K562 (cell line): ENCODE measurements at regions of chr20 and their contacts with region 1.

Region 1: GRCh38 chr20:34927736-34928135 is 27.9 kb downstream of the GSS start:
- DNase-seq: no peak
- ATAC-seq: no peak
- H3K4me3 ChIP-seq: no peak overlapping the region
- H3K27ac ChIP-seq: no peak overlapping the region
- H3K4me1 ChIP-seq: no peaks in the 10 kb centered on the region; a peak in 1 of 5 replicates
- H3K27me3 ChIP-seq: no peaks in the 10 kb centered on the region
- CTCF ChIP-seq: no peak
- EP300 ChIP-seq: no peak
- POLR2A ChIP-seq: no peak
- RAD21 ChIP-seq: no peak

Region 2: GRCh38 chr20:34825530-34826362 is 102.0 kb before region 1 on chr20 and contains the start of gene NCOA6:
- CTCF ChIA-PET with region 1: no interaction called
- POLR2A ChIA-PET with region 1: no interaction called
- in situ Hi-C with region 1: no loop called
- intact Hi-C with region 1: no loop called
- DNase-seq: peak; percentile 89 to 96 (median 93)
- ATAC-seq: peak; percentile 67
- H3K4me3 ChIP-seq: peak within 1 kb of the TSS; percentile 83
- H3K27ac ChIP-seq: peak within 1 kb of the TSS; percentile 91
- H3K4me1 ChIP-seq: peaks cover 20% of the 10 kb centered on the region in 2 experiments; a peak in 4 of 5 replicates
- H3K27me3 ChIP-seq: no peaks in the 10 kb centered on the region
- CTCF ChIP-seq: no peak
- EP300 ChIP-seq: no peak
- POLR2A ChIP-seq: peak; percentile 88
- RAD21 ChIP-seq: no peak
- polyA plus RNA-seq, gene NCOA6: 8.2 to 9.5 TPM

Region 3: DNA sequence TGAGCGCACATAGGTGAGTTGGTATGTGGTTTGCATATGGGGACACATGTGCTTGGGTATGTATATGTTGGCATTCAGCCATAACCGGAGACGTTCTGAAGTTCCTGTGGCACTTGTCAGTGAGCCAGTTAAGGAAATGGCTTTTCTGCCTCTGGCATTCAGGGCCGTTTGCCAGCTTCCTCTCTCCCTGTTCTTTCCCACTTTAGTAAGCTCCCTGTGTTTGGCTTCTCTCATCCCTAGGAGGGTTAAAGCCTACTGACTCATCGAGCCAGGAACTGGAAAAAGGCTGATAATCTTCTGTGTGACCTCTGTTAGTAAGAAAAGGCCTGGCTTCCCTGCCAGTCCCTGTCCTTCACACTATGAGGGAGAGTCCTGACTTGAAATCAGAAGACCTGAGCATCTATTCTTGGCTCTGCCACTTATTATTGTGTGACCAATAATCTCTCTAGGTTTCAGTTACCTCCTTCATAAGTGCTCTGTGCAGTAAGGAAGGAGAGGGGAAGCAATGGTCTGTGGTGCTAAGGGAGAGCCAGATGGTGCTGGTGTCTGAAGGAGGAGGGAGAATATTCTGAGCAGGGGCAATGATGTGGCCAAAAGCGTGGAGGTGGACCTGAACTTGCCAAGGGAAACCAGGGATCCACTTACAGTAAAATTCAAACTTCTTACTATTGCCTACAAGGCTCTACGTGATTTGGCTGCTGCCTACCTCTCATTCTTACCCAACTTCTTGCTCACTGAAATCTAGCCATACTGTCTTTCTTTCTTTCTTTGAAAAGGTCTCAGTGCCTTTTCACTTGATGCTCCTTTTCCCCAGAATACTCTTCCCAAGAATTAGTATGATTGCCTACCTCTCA is 19.9 kb before region 1 on chr20:
- CTCF ChIA-PET with region 1: no interaction called
- POLR2A ChIA-PET with region 1: interaction called, 19 read pairs
- in situ Hi-C with region 1: no loop called
- intact Hi-C with region 1: no loop called
- DNase-seq: peak in 1 of 4 experiments; percentile 19
- ATAC-seq: peak; percentile 55
- H3K4me3 ChIP-seq: no peak overlapping the region
- H3K27ac ChIP-seq: peak overlapping the region; percentile 40; the same call in 1 of the 3 replicates
- H3K4me1 ChIP-seq: peaks cover 9 to 26% of the 10 kb centered on the region in 2 experiments; a peak in 4 of 5 replicates
- H3K27me3 ChIP-seq: no peaks in the 10 kb centered on the region
- CTCF ChIP-seq: no peak
- EP300 ChIP-seq: no peak
- POLR2A ChIP-seq: no peak
- RAD21 ChIP-seq: no peak

Region 4: GRCh38 chr20:34943808-34944568 is 16.3 kb after region 1 on chr20:
- CTCF ChIA-PET with region 1: no interaction called
- POLR2A ChIA-PET with region 1: interaction called, 14 read pairs
- in situ Hi-C with region 1: no loop called
- intact Hi-C with region 1: no loop called
- DNase-seq: no peak
- ATAC-seq: no peak
- H3K4me3 ChIP-seq: no peak overlapping the region
- H3K27ac ChIP-seq: no peak overlapping the region; the same call in 2 of the 3 replicates
- H3K4me1 ChIP-seq: no peaks in the 10 kb centered on the region
- H3K27me3 ChIP-seq: no peaks in the 10 kb centered on the region
- CTCF ChIP-seq: no peak
- EP300 ChIP-seq: no peak
- POLR2A ChIP-seq: no peak
- RAD21 ChIP-seq: no peak

Region 5: DNA sequence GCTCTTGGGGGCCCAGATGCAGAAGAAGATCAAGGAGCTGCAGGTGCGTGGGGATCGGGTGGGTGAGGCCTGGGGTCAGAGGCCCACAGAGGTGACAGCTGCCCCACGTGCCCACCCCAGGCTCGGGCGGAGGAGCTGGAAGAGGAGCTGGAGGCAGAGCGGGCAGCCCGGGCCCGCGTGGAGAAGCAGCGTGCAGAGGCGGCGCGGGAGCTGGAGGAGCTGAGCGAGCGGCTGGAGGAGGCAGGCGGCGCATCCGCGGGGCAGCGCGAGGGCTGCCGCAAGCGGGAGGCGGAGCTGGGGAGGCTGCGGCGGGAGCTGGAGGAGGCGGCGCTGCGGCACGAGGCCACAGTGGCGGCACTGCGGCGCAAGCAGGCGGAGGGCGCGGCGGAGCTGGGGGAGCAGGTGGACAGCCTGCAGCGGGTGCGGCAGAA is 69.4 kb after region 1 on chr20:
- CTCF ChIA-PET with region 1: no interaction called
- POLR2A ChIA-PET with region 1: no interaction called
- in situ Hi-C with region 1: no loop called
- intact Hi-C with region 1: no loop called
- DNase-seq: no peak
- ATAC-seq: no peak
- H3K4me3 ChIP-seq: no peak overlapping the region
- H3K27ac ChIP-seq: no peak overlapping the region
- H3K4me1 ChIP-seq: peaks cover 0 to 19% of the 10 kb centered on the region in 2 experiments; a peak in 2 of 5 replicates
- H3K27me3 ChIP-seq: no peaks in the 10 kb centered on the region
- CTCF ChIP-seq: no peak
- EP300 ChIP-seq: no peak
- POLR2A ChIP-seq: no peak
- RAD21 ChIP-seq: no peak